Mammary epithelial cell (primary cell): ENCODE measurements at regions of chr9 and their contacts with region 1.

Region 1: GRCh38 chr9:113591001-113591898 is 127.7 kb downstream of the RGS3 start:
- DNase-seq: peak; percentile 58
- H3K4me3 ChIP-seq: no peak overlapping the region
- H3K27ac ChIP-seq: no peak overlapping the region
- H3K4me1 ChIP-seq: peaks cover 13% of the 10 kb centered on the region
- H3K27me3 ChIP-seq: no peaks in the 10 kb centered on the region
- CTCF ChIP-seq: peak; percentile 84 to 91

Region 2: DNA sequence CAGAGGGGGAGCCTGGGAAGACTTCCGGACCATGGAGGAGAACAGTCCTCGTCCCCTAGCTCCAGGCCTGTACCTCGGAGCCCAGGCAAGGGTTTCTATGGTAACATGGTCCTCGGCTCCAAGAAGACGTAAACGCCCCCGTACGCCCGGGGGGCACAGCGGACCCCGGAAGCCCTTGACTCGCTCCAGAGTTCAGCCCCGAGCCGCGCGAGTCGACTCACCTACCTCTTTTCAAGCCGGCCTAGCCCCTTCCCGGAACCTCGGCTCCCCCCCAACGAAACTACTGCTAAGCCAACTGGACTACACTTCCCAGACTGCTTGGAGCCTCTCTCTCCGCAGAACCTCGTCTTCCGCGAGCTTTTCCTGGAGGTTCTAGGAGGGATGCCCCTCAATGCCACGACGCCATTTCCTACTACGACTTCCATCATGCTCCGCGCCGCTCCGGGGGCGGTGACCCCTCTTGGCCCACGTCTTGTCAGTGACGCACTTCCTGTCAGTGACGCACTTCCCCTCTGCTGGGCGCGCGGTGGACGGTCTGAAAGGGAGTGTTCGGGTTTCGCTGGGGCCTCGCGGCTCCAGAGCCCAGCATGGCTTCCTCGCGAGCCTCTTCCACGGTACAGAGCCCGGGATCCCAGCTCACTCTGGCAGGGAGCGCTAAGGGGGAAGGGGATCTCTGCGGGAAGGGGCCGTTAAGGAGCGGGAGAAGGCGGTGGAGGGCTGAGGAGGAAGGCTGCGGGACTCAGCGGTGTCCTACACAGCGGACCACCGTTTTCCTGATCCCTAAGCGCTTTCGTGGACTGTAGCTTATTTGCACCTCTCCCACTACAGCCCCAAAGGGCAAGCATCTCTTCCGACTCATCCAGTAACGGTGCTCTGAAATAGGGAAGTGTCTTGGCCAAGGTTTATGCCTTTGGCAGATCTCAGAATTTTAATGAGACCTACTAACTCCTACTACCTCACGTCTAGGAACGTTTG is 315.8 kb before region 1 on chr9 and contains the starts of genes CDC26 and PRPF4:
- CTCF ChIA-PET with region 1: no interaction called
- dilution Hi-C with region 1: no loop called
- in situ Hi-C with region 1: no loop called
- intact Hi-C with region 1: loop called (anchors 2 kb)
- DNase-seq: peak; percentile 98
- H3K4me3 ChIP-seq: peak within 1 kb of the TSS; percentile 63 to 89 (median 82)
- H3K27ac ChIP-seq: peak within 1 kb of the TSS; percentile 91
- H3K4me1 ChIP-seq: peaks cover 15% of the 10 kb centered on the region
- H3K27me3 ChIP-seq: no peaks in the 10 kb centered on the region
- CTCF ChIP-seq: no peak
- total RNA-seq, gene CDC26: 16.2 to 26.4 TPM
- total RNA-seq, gene PRPF4: 24.2 to 38.1 TPM

Region 3: DNA sequence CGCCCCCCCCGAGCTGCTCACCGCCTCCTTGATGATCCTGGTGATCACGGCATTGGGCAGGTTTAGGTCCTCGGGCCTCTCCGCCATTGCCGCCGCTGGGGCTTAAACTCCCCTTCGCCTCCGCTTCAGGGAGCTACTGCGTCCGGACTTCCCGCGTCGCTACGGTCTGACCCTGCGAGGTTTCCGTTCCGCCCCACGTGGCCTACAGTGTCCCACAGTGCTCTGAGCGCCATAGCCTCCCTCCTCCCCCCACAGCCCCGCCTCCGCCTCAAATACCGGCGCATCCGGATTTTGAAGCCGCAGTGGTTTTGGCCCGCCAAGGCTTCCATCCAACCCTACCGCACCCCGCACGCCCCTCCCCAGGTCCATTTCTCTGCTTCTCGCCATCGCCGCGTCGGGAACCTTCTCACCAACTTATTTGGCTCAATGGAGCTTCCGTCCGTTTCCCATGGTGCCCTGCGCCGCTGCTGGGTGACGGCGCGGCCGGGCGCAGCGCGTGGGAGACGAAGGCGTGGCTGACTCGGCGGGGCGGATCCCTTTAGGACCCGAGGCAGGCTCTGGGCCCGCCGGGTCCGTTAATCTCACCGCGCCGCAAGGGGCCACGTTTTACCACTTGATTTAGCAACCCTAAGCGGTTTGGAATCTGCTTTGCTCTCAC is 180.9 kb before region 1 on chr9 and contains the starts of genes C9orf43 and POLE3:
- CTCF ChIA-PET with region 1: no interaction called
- dilution Hi-C with region 1: no loop called
- in situ Hi-C with region 1: no loop called
- intact Hi-C with region 1: loop called (anchors 2 kb)
- DNase-seq: peak; percentile 96
- H3K4me3 ChIP-seq: peak within 1 kb of the TSS; percentile 89 to 98 (median 97)
- H3K27ac ChIP-seq: peak within 1 kb of the TSS; percentile 96
- H3K4me1 ChIP-seq: peaks cover 13% of the 10 kb centered on the region
- H3K27me3 ChIP-seq: no peaks in the 10 kb centered on the region
- CTCF ChIP-seq: no peak
- total RNA-seq, gene C9orf43: 0.56 to 0.83 TPM
- total RNA-seq, gene POLE3: 42.8 to 50.2 TPM

Region 4: GRCh38 chr9:113454914-113455761 is 136.1 kb before region 1 on chr9:
- CTCF ChIA-PET with region 1: no interaction called
- dilution Hi-C with region 1: no loop called
- in situ Hi-C with region 1: no loop called
- intact Hi-C with region 1: loop called (anchors 2 kb)
- DNase-seq: peak; percentile 40
- H3K4me3 ChIP-seq: no peak overlapping the region
- H3K27ac ChIP-seq: no peak overlapping the region
- H3K4me1 ChIP-seq: peaks cover 6% of the 10 kb centered on the region
- H3K27me3 ChIP-seq: no peaks in the 10 kb centered on the region
- CTCF ChIP-seq: no peak

Region 5: DNA sequence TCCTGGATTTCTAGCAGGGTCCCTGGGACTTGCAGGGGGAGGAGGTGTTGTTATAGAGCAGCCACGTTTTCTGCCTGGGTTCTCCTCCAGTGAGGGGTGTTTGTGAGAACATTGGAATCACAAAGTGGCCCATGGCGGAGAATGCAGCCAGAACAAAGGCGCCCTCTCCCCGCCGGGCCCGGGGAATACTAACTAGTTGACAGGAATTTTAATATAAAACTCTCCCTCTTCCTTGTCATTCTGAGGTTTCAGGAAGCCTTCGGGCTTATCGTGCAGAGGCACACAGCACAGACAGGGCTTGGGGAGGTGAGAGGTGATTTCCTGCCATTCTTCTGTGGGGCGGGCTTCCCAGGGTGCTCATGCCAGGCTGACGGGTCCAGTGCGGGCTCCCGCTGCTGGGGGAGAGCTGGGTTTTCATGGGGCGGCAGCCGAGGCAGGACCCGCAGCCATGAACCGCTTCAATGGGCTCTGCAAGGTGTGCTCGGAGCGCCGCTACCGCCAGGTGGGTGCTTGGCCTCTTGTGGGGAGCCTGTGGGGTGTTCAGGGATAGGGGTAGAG is 90.0 kb before region 1 on chr9:
- CTCF ChIA-PET with region 1: no interaction called
- dilution Hi-C with region 1: no loop called
- in situ Hi-C with region 1: no loop called
- intact Hi-C with region 1: no loop called
- DNase-seq: no peak
- H3K4me3 ChIP-seq: no peak overlapping the region
- H3K27ac ChIP-seq: no peak overlapping the region
- H3K4me1 ChIP-seq: no peaks in the 10 kb centered on the region
- H3K27me3 ChIP-seq: no peaks in the 10 kb centered on the region
- CTCF ChIP-seq: no peak

Region 6: DNA sequence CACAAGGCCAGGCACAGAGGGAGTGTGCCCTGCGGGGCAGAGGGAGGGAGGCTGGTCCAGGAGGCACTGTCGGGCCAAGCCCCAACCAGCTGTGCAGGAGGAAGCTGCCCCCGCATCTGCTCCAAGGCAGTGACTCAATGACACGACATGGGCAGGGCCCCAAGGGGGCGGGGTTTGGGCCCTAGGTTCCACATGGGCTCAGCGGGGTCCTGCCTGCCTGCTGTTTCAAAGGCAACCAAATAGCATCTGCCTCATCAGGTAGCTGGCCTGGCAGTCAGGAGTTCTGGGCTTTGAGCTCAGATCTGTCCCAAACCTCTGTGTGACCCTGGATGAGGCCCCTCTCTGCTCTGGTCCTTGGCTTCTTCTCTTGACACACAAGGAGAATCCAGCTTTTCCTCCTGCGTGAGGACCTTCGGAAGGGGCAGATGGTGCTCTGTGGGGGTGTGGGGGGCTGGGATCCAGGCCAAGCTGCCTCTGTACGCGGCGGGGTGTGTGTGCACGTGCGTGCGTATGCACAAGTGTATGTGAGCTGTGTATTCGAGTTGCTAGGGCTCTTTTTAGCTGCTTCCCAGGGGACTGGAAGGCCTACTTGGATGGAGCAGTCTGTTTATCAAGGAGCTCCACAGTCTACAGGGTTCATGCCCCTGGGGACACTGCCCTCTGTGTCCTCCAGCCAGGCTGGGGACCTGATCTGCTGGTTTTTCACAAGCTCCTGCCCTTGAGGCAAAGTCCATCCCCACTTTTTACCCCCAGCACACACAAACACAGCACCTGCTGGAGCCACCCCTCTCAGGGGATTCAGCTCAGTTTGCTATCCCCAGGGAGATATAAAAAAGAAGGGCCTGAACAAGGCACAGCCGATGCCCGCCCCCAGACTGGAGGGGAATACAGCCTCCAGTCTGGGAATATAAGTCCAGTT is 11.1 kb after region 1 on chr9:
- CTCF ChIA-PET with region 1: interaction called, 12 read pairs
- dilution Hi-C with region 1: no loop called
- in situ Hi-C with region 1: no loop called
- intact Hi-C with region 1: no loop called
- DNase-seq: peak; percentile 80
- H3K4me3 ChIP-seq: no peak overlapping the region
- H3K27ac ChIP-seq: peak overlapping the region; percentile 29
- H3K4me1 ChIP-seq: peaks cover 27% of the 10 kb centered on the region
- H3K27me3 ChIP-seq: no peaks in the 10 kb centered on the region
- CTCF ChIP-seq: no peak

Region 7: GRCh38 chr9:113657703-113658544 is 66.7 kb after region 1 on chr9:
- CTCF ChIA-PET with region 1: interaction called, 24 read pairs
- dilution Hi-C with region 1: no loop called
- in situ Hi-C with region 1: loop called (anchors 5 kb)
- intact Hi-C with region 1: loop called (anchors 1 kb)
- DNase-seq: peak; percentile 67
- H3K4me3 ChIP-seq: no peak overlapping the region
- H3K27ac ChIP-seq: no peak overlapping the region
- H3K4me1 ChIP-seq: peaks cover 5% of the 10 kb centered on the region
- H3K27me3 ChIP-seq: no peaks in the 10 kb centered on the region
- CTCF ChIP-seq: peak; percentile 93 to 97

Region 8: DNA sequence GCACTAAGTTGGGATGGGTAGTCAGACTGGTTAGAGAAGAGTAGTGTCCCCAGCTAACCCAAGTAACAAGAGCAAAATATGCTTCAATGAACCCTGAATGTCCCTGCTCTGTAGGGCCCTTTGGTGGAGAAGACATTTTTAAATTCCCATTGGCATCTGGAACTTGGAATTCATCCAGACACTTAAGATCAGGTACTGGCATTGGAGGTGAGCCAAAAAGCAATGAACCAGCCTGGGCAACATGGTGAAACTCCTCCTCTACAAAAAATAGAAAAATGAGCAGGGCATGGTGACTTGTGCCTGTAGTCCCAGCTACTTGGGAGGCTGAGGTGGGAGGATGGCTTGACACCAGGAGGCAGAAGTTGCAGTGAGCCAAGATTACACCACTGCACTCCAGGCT is 225.9 kb after region 1 on chr9:
- CTCF ChIA-PET with region 1: no interaction called
- dilution Hi-C with region 1: no loop called
- in situ Hi-C with region 1: no loop called
- intact Hi-C with region 1: no loop called
- DNase-seq: no peak
- H3K4me3 ChIP-seq: no peak overlapping the region
- H3K27ac ChIP-seq: no peak overlapping the region
- H3K4me1 ChIP-seq: no peaks in the 10 kb centered on the region
- H3K27me3 ChIP-seq: peaks cover 4% of the 10 kb centered on the region
- CTCF ChIP-seq: no peak